Activated naive CD4-positive, alpha-beta T cell treated with anti-CD3 and anti-CD28 coated beads, Interleukin-2, amount 10 ng/mL, durations not matched to agents 7 days and 5 days (primary cell): ENCODE measurements at regions of chr11 and their contacts with region 1.

Region 1: DNA sequence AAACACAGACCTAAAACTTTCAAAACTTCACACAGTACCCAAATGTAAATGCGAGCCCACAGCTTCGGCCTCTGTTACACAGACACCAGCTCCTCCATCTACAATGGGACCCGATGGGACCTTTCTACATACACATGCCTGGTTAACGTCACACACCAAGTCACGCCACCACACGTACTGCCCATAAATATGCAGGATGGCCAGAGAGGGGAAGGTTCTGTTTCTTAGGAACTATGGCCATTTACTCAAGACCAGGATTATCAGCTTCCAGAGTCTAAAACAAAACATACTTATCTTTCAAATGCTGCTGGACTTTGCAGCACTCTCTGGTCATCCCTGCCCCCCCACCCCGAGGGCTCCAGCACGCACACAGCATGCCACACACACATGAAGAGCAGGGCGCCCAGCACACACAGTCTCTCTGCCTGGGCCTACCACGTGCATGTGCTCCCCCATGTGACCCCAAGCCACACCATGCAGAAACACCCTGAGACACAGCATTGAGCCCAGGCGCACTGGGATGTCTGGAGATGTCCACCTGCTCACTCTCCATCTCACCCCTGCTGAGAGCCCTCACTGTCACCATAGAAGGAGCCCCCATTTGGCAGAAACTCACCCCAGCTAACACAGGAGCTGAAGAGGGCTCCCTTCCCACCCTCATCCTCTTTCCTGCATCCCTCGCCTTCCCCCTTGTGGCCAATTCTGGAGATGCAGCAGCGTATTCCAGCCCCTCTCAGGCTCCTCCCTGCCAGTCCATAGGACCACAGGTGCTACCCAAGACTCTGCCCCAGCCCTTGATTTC is 61.8 kb downstream of the SLC22A12 start:
- DNase-seq: peak; percentile 84
- H3K4me3 Mint-ChIP-seq: no peak overlapping the region
- H3K27ac Mint-ChIP-seq: no peak overlapping the region
- H3K4me1 Mint-ChIP-seq: peaks cover 4% of the 10 kb centered on the region
- H3K27me3 Mint-ChIP-seq: peaks cover 25% of the 10 kb centered on the region

Region 2: GRCh38 chr11:64489831-64490441 is 162.9 kb before region 1 on chr11:
- CTCF ChIA-PET with region 1: interaction called, 10 read pairs
- DNase-seq: peak; percentile 60
- H3K4me3 Mint-ChIP-seq: no peak overlapping the region
- H3K27ac Mint-ChIP-seq: no peak overlapping the region
- H3K4me1 Mint-ChIP-seq: peaks cover 10% of the 10 kb centered on the region
- H3K27me3 Mint-ChIP-seq: peaks cover 40% of the 10 kb centered on the region

Region 3: GRCh38 chr11:64778508-64779346 is 125.9 kb after region 1 on chr11 and contains the start of gene SF1:
- CTCF ChIA-PET with region 1: no interaction called
- DNase-seq: peak; percentile 100
- H3K4me3 Mint-ChIP-seq: peak within 1 kb of the TSS; percentile 96
- H3K27ac Mint-ChIP-seq: peak within 1 kb of the TSS; percentile 100
- H3K4me1 Mint-ChIP-seq: peaks cover 56% of the 10 kb centered on the region
- H3K27me3 Mint-ChIP-seq: no peaks in the 10 kb centered on the region